Activated T-helper 2 cell treated with anti-CD3 and anti-CD28 coated beads, Interferon-gamma antibody, Interleukin-2, Interleukin-4, amounts not matched to agents 10 μg/mL and 5 μg/mL and 100 μg/mL, durations not matched to agents 14 hours and 24 hours and 36 hours (primary cell): ENCODE measurements at regions of chr6 and their contacts with region 1.

Region 1: GRCh38 chr6:105431226-105431625 is 28.3 kb upstream of the PREP start:
- DNase-seq: no peak
- H3K4me3 Mint-ChIP-seq: no peak overlapping the region
- H3K27ac Mint-ChIP-seq: no peak overlapping the region
- H3K4me1 Mint-ChIP-seq: peaks cover 6% of the 10 kb centered on the region
- H3K27me3 Mint-ChIP-seq: peaks cover 26% of the 10 kb centered on the region

Region 2: DNA sequence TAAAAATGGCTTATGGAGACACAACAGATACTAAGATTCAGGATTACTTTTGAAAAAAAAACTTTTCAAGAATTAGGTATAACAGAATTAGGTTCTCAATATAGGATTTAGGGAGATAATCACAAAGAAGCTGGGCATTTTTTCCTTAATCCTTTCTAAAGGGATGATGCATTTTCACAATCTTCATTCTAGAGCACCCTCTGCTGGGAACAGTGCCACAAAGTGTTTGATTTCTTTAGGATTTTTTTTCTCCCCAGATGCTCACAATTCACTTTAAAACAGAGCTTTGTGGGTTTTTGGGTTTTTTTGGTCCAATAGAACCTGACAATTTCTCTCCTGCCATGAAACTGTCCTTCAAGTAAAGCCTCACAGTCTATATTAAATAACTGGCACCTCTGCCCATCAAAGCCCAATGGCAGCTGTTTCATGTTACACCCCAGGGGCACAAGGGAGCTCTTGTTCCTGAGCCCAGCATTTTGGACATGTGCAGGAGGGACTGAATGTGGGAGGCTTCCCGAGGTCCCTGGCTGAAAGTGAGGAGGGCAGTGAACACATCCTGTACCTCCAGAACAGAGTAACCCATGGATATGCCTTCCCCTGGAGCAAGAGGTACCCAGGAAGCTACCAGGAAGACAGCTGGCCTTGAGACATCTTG is 68.0 kb before region 1 on chr6:
- intact Hi-C with region 1: no loop called
- DNase-seq: no peak
- H3K4me3 Mint-ChIP-seq: no peak overlapping the region
- H3K27ac Mint-ChIP-seq: no peak overlapping the region
- H3K4me1 Mint-ChIP-seq: peaks cover 8% of the 10 kb centered on the region
- H3K27me3 Mint-ChIP-seq: no peaks in the 10 kb centered on the region

Region 3: GRCh38 chr6:105733565-105734162 is 302.4 kb after region 1 on chr6:
- intact Hi-C with region 1: loop called (anchors 5 kb)
- DNase-seq: no peak
- H3K4me3 Mint-ChIP-seq: no peak overlapping the region
- H3K27ac Mint-ChIP-seq: no peak overlapping the region
- H3K4me1 Mint-ChIP-seq: peaks cover 21% of the 10 kb centered on the region
- H3K27me3 Mint-ChIP-seq: peaks cover 2% of the 10 kb centered on the region

Region 4: GRCh38 chr6:105793130-105793529 is 361.9 kb after region 1 on chr6:
- intact Hi-C with region 1: loop called (anchors 5 kb)
- DNase-seq: no peak
- H3K4me3 Mint-ChIP-seq: no peak overlapping the region
- H3K27ac Mint-ChIP-seq: peak overlapping the region; percentile 34
- H3K4me1 Mint-ChIP-seq: peaks cover 86% of the 10 kb centered on the region
- H3K27me3 Mint-ChIP-seq: no peaks in the 10 kb centered on the region

Region 5: GRCh38 chr6:106300944-106301343 is 869.7 kb after region 1 on chr6:
- intact Hi-C with region 1: loop called (anchors 2 kb)
- DNase-seq: no peak
- H3K4me3 Mint-ChIP-seq: no peak overlapping the region
- H3K27ac Mint-ChIP-seq: no peak overlapping the region
- H3K4me1 Mint-ChIP-seq: peaks cover 13% of the 10 kb centered on the region
- H3K27me3 Mint-ChIP-seq: no peaks in the 10 kb centered on the region